ENCODE measurements at regions of chr1 and their contacts with region 1.

Region 1: GRCh38 chr1:11838349-11839272 is 9.0 kb downstream of the NPPA start:
- DNase-seq: peak; percentile 79 to 92
- ATAC-seq: peak; percentile 87
- H3K4me3 ChIP-seq: no peak overlapping the region
- H3K27ac ChIP-seq: no peak overlapping the region
- H3K4me1 ChIP-seq: no peaks in the 10 kb centered on the region
- H3K27me3 ChIP-seq: no peaks in the 10 kb centered on the region

Region 2: GRCh38 chr1:11893907-11894251 is 55.3 kb after region 1 on chr1:
- intact Hi-C with region 1: loop called (anchors 1 to 5 kb)
- DNase-seq: peak; percentile 66 to 88
- ATAC-seq: no peak
- H3K4me3 ChIP-seq: no peak overlapping the region
- H3K27ac ChIP-seq: no peak overlapping the region
- H3K4me1 ChIP-seq: no peaks in the 10 kb centered on the region
- H3K27me3 ChIP-seq: no peaks in the 10 kb centered on the region

Region 3: DNA sequence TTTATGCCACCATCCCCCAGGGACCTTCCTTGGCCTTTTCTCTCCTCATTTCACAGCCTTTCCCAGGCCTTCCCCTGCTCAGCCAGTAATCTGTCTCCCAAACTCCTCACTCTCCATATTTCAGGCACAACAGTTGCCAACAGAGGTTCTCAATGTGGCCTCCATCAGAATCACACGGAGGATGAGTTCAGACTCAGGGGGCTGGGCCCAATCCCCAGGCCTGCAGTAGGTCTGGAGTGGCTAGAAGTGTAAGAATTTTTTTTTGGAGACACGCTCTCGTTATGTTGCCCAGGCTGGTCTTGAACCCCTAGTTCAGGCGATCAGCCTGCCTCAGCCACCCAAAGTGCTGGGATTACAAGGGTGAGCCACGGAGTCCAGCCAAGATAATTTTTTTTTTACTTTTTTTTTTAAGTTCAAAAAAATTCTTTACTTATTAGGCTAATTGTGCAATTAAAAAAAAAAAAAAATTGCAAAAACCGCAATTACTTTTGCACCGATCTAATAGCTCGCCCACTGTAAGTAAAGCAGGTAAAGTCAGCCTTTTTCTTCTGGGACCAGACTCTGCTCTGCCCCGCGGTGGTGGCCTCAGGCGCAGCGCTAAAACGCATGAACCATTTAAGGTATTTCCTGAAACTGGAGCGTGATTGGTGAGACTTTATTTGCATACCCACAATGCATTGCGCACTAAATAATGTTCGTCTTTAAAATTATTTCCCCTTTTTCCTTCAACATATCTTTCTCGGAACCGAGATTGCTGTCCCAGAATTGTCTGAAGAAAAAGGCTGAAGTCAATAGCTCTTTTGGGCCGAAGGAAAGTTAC is 68.9 kb after region 1 on chr1:
- intact Hi-C with region 1: loop called in 1 of 2 experiments (anchors 5 kb)
- DNase-seq: peak; percentile 94 to 95
- ATAC-seq: peak; percentile 95
- H3K4me3 ChIP-seq: no peak overlapping the region
- H3K27ac ChIP-seq: peak overlapping the region; percentile 90 to 93
- H3K4me1 ChIP-seq: no peaks in the 10 kb centered on the region
- H3K27me3 ChIP-seq: peaks cover 0 to 5% of the 10 kb centered on the region in 2 donors

Region 4: GRCh38 chr1:11967028-11967547 is 128.5 kb after region 1 on chr1:
- intact Hi-C with region 1: loop called (anchors 5 kb)
- DNase-seq: no peak
- ATAC-seq: peak; percentile 17
- H3K4me3 ChIP-seq: no peak overlapping the region
- H3K27ac ChIP-seq: no peak overlapping the region
- H3K4me1 ChIP-seq: no peaks in the 10 kb centered on the region
- H3K27me3 ChIP-seq: no peaks in the 10 kb centered on the region

Region 5: DNA sequence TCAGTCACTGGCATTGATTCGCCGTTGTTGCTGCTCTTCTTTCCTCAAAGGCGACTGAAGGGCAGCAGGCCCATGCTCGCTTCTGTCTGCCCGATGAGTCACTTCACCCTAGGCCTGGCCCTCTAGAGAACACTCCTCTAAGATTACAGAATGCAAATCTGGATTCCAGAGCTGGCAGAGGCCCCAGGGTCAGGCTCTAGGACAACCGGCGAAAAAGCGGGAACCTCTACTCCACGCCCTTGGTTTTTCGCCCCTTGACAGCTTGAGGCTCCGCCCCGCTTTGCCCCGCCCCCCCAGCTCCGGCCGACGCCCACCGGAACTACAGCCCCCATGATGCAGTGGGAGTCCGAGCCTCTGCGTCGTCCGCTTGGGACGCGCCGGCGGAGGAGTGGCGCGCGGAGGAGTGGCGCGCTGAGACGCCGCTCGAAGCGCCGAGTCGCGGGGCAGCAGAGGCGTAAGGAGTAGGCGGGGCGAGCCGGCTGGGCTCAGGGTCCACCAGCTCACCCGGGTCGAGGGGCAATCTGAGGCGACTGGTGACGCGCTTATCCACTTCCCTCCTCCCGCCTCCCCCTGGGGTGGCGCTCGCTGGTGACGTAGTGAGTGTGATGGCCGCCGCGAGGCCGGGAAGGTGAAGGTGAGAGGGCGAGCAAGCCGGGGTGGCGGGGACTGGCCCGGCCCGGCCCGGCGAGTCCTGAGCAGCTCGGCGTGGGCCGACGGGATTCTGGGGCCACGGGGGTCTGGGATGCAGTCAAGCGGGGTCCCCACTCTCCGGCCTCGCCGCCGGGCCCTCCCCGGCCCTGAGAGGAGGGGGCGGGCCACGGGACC is 141.5 kb after region 1 on chr1 and contains the start of gene MFN2:
- intact Hi-C with region 1: loop called in 1 of 2 experiments (anchors 5 kb)
- DNase-seq: peak; percentile 98
- ATAC-seq: peak; percentile 97
- H3K4me3 ChIP-seq: peak within 1 kb of the TSS; percentile 61 to 74
- H3K27ac ChIP-seq: peak within 1 kb of the TSS; percentile 32 to 61
- H3K4me1 ChIP-seq: no peaks in the 10 kb centered on the region
- H3K27me3 ChIP-seq: no peaks in the 10 kb centered on the region
- total RNA-seq, gene MFN2: 57.1 TPM

Region 6: GRCh38 chr1:12208764-12209494 is 370.3 kb after region 1 on chr1:
- intact Hi-C with region 1: loop called in 1 of 2 experiments (anchors 5 kb)
- DNase-seq: peak; percentile 85 to 96
- ATAC-seq: peak; percentile 90
- H3K4me3 ChIP-seq: no peak overlapping the region
- H3K27ac ChIP-seq: no peak overlapping the region
- H3K4me1 ChIP-seq: no peaks in the 10 kb centered on the region
- H3K27me3 ChIP-seq: no peaks in the 10 kb centered on the region

Measured in aorta (tissue), 5 donors.